ENCODE measurements at regions of chr17 and their contacts with region 1.

Region 1: DNA sequence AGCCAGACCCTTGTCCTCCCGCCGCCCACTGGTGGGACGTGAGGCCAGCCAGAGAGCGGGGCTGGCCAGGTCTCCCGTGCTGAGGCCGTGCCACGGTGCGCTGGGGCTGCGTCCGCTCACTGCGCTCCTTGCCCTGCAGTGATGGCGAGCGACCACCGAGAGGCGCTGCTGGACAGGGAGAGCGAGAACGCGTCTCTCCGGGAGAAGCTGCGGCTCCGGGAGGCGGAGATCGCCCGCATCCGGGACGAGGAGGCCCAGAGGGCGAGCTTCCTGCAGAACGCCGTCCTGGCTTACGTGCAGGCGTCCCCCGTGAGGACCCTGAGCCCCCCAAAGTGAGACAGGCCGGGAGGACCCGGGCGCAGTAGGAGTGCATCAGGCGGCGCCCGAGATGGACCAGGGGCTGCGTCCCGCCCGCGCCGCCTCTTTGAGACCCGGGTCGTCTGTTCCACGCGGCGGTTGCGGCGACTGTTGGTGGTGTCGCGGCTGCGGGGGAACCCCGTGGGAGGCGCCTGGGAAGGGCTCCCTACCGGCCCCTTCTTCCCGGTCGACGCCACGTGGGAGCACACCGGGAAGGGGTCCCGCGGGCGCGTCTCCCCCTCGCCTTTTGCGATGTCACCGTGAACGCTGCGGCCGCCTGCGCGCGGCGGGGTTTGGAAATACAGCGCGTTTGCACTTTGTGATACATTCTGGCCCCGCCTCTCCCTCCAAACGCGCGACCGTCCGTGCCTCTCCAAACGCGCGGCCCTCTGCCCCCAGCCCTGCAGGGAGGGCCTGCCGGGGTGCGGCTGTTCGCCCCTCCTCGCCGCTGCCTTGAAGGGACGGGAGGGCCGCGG is 792 bp upstream of the RAC3 start:
- DNase-seq: peak; percentile 66 to 90 (median 81)
- ATAC-seq: peak; percentile 92
- H3K4me3 ChIP-seq: peak overlapping the region; percentile 49 to 59
- H3K4me3 Mint-ChIP-seq: peak overlapping the region; percentile 82
- H3K27ac ChIP-seq: no peak overlapping the region
- H3K27ac Mint-ChIP-seq: no peak overlapping the region
- H3K4me1 ChIP-seq: peaks cover 19% of the 10 kb centered on the region
- H3K4me1 Mint-ChIP-seq: peaks cover 14% of the 10 kb centered on the region
- H3K27me3 ChIP-seq: no peaks in the 10 kb centered on the region
- H3K27me3 Mint-ChIP-seq: no peaks in the 10 kb centered on the region
- CTCF ChIP-seq: peak; percentile 87

Region 2: GRCh38 chr17:81854974-81855774 is 175.5 kb before region 1 on chr17:
- CTCF ChIA-PET with region 1: no interaction called
- POLR2A ChIA-PET with region 1: no interaction called
- intact Hi-C with region 1: no loop called
- DNase-seq: peak in 1 of 9 experiments; percentile 26
- ATAC-seq: peak; percentile 44
- H3K4me3 ChIP-seq: no peak overlapping the region
- H3K4me3 Mint-ChIP-seq: no peak overlapping the region
- H3K27ac ChIP-seq: no peak overlapping the region
- H3K27ac Mint-ChIP-seq: no peak overlapping the region
- H3K4me1 ChIP-seq: peaks cover 16% of the 10 kb centered on the region
- H3K4me1 Mint-ChIP-seq: peaks cover 27% of the 10 kb centered on the region
- H3K27me3 ChIP-seq: no peaks in the 10 kb centered on the region
- H3K27me3 Mint-ChIP-seq: no peaks in the 10 kb centered on the region
- CTCF ChIP-seq: no peak

Region 3: DNA sequence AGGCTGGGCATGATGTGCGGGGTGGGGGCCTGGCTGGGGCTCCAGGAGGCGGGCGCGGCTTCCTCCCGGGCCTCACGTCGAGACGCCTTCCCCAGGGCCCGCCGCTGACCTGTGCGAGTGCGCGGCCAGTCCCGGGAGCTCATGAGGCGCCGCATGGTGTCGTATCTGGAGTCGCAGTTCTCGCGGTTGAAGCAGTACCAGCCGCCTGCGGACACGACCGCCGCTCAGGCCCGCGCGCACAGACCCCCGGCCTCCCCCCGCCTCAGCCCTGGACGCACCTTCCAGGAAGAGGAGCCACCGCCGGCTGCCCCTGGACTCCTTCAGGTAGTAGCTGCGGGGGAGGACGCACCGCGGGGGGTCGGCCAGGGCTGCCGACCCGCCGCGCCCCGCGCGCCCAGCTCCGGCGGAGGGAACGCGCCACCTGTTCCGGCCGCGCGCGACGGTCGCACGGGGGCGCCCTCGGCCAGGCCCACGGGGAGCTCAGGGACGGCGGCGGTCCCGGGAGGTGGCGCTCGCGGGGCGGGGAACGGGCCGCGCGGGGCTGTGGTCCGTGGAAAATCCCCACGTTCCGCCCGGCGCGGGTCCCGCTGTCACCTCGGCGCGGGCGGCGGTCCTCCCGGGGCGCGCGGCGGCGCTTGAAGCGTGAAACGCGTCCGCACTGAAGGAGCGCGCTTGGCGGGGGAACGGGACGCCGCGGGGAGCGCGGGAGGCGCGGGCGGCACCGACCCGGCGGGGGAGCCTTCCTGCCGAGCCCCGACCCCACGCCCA is 71.1 kb before region 1 on chr17:
- CTCF ChIA-PET with region 1: interaction called, 220 read pairs
- POLR2A ChIA-PET with region 1: interaction called, 6 read pairs
- intact Hi-C with region 1: no loop called
- DNase-seq: peak; percentile 71 to 92 (median 81)
- ATAC-seq: peak; percentile 93
- H3K4me3 ChIP-seq: peak overlapping the region; percentile 8 to 35
- H3K4me3 Mint-ChIP-seq: peak overlapping the region; percentile 15
- H3K27ac ChIP-seq: no peak overlapping the region
- H3K27ac Mint-ChIP-seq: no peak overlapping the region
- H3K4me1 ChIP-seq: peaks cover 6% of the 10 kb centered on the region
- H3K4me1 Mint-ChIP-seq: peaks cover 10% of the 10 kb centered on the region
- H3K27me3 ChIP-seq: peaks cover 6 to 22% of the 10 kb centered on the region in 2 experiments
- H3K27me3 Mint-ChIP-seq: peaks cover 13% of the 10 kb centered on the region
- CTCF ChIP-seq: peak; percentile 90

Region 4: DNA sequence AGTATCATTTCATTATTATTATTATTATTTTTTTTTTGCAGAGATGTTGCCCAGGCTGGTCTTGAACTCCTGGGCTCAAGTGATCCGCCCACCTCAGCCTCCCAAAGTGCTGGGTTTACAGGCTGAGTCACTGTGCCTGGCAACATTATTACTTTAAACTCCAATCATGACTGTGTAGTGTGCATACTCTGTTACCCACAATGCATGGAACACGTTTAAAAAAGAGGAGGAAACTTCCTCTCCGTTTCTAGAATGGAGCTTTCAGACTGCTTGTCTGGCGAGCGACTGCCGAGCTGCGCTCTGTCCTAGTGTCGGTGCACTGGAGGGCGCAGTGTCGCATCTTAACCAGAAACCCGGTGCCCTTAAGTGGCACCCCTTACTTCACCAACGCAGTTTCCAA is 89.5 kb after region 1 on chr17:
- CTCF ChIA-PET with region 1: interaction called, 16 read pairs
- POLR2A ChIA-PET with region 1: interaction called, 3 read pairs
- intact Hi-C with region 1: no loop called
- DNase-seq: peak in 3 of 9 experiments; percentile 26 to 76 (median 40)
- ATAC-seq: peak; percentile 88
- H3K4me3 ChIP-seq: no peak overlapping the region
- H3K4me3 Mint-ChIP-seq: peak overlapping the region; percentile 56
- H3K27ac ChIP-seq: no peak overlapping the region
- H3K27ac Mint-ChIP-seq: peak overlapping the region; percentile 87
- H3K4me1 ChIP-seq: peaks cover 58% of the 10 kb centered on the region
- H3K4me1 Mint-ChIP-seq: peaks cover 59% of the 10 kb centered on the region
- H3K27me3 ChIP-seq: no peaks in the 10 kb centered on the region
- H3K27me3 Mint-ChIP-seq: no peaks in the 10 kb centered on the region
- CTCF ChIP-seq: peak; percentile 33

Region 5: GRCh38 chr17:82205719-82206508 is 175.2 kb after region 1 on chr17:
- CTCF ChIA-PET with region 1: interaction called, 12 read pairs
- POLR2A ChIA-PET with region 1: no interaction called
- intact Hi-C with region 1: no loop called
- DNase-seq: peak; percentile 61 to 91 (median 82)
- ATAC-seq: peak; percentile 83
- H3K4me3 ChIP-seq: no peak overlapping the region
- H3K4me3 Mint-ChIP-seq: peak overlapping the region; percentile 60
- H3K27ac ChIP-seq: peak overlapping the region; percentile 56 to 89
- H3K27ac Mint-ChIP-seq: peak overlapping the region; percentile 96
- H3K4me1 ChIP-seq: peaks cover 24% of the 10 kb centered on the region
- H3K4me1 Mint-ChIP-seq: peaks cover 40% of the 10 kb centered on the region
- H3K27me3 ChIP-seq: no peaks in the 10 kb centered on the region
- H3K27me3 Mint-ChIP-seq: no peaks in the 10 kb centered on the region
- CTCF ChIP-seq: peak; percentile 88

Region 6: DNA sequence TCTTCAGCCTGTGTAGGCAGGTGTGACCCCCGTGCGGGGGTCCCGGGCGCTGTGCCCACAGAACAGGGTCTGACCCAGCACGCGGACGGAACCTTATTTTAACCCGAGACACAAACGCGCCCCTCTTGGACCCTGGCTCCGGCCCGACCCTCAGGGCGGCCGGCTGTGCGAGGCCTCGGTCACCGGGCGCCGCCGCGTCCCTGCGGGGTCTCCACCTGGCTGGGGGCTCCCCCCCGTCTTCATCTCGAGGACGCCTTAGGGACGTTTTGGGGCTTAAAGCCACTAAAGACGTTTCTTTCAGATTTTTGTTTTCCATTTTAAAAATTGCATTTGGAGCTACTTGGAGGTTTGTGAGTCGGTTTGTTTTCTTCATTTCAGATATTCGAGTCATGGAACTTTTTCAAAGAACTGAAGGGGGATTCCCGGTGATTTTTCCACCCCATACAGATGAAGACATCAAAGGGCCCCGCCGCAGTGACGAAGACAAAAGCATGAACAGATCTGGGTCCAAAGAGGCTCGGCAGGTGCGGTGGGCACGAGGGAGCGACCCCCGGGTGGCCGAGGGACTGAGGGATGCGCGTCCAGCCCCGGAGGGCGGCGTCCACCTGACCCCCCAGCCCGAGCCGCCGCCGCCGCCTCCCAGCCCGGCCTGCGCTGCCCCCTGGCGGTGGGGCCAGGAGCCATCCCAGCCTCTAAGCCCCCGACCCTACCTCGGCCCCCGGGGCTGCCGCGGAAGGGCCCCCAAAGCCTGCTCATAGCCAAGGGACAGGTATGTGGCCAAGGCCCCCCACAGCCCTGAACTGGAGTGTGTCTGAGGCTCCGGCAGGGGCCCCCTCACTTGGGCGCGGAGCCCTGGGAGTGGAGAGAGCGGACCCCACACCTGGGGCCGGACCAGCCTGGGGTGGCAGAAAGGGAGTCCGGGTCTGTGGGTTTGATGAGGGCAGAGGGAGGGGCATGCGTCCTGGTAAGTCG is 290.6 kb after region 1 on chr17:
- CTCF ChIA-PET with region 1: interaction called, 15 read pairs
- POLR2A ChIA-PET with region 1: no interaction called
- intact Hi-C with region 1: loop called in 1 of 2 experiments (anchors 1 kb)
- DNase-seq: peak; percentile 46 to 94 (median 84)
- ATAC-seq: peak; percentile 44
- H3K4me3 ChIP-seq: peak overlapping the region; percentile 25 to 56
- H3K4me3 Mint-ChIP-seq: peak overlapping the region; percentile 74
- H3K27ac ChIP-seq: peak overlapping the region in 1 of 2 experiments; percentile 36
- H3K27ac Mint-ChIP-seq: peak overlapping the region; percentile 92
- H3K4me1 ChIP-seq: peaks cover 24% of the 10 kb centered on the region
- H3K4me1 Mint-ChIP-seq: peaks cover 19% of the 10 kb centered on the region
- H3K27me3 ChIP-seq: peaks cover 0 to 5% of the 10 kb centered on the region in 2 experiments
- H3K27me3 Mint-ChIP-seq: no peaks in the 10 kb centered on the region
- CTCF ChIP-seq: peak; percentile 97

Measured in CD8-positive, alpha-beta T cell (primary cell).